Aorta (tissue), 5 donors: ENCODE measurements at regions of chr10 and their contacts with region 1.

Region 1: GRCh38 chr10:784403-785088 is 95.1 kb upstream of the DIP2C start:
- DNase-seq: peak; percentile 83 to 93
- ATAC-seq: peak; percentile 59
- H3K4me3 ChIP-seq: no peak overlapping the region
- H3K27ac ChIP-seq: no peak overlapping the region
- H3K4me1 ChIP-seq: no peaks in the 10 kb centered on the region
- H3K27me3 ChIP-seq: no peaks in the 10 kb centered on the region

Region 2: DNA sequence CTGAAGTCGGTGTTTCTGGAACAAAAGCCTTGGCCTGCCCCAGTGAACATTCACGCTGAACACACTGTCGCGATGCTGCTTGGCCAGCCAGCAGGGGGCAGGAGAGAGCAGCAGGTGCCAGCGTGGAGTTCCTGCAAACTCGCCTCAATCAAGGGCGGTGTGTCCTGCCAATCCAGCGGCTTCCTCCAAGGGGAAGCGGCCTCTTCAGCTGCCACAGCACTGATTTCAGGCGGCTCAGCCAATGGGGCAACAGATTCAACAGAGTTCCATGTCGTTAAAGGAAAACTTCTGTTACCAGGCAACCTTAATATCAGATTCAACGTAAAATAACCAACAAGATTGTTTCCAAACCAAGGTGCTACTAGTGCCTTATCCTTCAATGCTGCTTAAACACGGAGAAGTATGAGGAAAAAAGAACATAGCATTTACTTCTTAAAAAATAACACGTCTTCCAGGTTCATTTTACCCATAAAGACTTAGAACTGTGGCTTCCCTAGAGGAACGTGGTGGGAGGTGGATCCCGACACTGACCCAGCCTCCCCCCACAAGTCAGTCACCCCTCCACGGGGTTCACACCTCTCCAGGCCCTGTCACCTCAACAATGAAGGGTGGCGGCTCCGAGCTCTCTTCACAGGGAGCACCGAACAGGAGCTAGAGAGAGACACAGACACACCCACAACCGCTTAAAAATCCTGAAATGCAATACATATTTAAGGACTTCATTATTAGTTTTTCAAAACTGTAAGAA is 273.3 kb before region 1 on chr10:
- intact Hi-C with region 1: loop called (anchors 5 to 10 kb)
- DNase-seq: peak; percentile 95 to 99
- ATAC-seq: peak; percentile 93
- H3K4me3 ChIP-seq: no peak overlapping the region
- H3K27ac ChIP-seq: no peak overlapping the region
- H3K4me1 ChIP-seq: no peaks in the 10 kb centered on the region
- H3K27me3 ChIP-seq: no peaks in the 10 kb centered on the region

Region 3: DNA sequence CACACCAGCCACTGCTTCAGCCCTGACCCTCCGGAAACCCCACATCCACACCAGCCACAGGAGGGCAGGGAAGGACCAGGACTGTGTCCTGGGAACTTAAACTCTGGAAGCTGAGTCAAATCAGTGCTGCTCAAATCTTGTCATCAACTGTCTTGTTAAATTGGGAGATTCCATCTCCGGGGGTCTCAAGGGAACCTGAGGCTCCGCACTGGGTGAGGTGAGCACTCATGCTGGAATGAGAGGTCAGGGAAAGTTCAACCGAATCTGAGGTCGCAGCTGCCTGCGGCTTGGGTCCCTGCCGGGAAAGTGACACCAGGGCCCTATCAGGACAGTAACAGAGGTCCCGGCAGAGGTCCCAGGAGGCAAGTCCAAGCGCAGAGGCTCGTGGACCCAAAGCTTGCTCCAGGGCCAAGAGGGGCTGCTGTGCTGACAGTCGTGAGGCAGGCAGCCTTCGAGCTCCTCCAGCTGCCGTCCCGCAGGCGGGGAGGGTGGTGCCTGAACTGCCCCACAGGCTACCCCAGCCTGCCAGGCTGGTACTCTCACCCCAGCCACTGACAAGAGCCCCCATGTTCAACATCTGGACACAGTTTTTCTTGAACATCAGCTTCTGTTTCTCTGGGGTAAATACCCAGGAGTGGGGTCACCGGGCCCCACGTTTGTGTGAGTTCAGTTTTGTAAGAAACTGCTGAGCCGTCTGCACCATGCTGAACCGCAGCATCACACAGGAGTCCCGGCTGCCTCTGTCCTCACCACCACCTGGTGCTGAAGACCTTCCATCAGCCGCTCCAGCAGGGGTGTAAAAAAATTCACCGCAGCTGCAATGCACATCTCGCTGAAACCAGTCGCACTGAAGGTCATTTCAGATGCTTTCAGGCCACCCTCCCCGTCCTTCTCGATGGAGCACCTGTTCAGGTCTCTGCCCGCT is 196.0 kb before region 1 on chr10:
- intact Hi-C with region 1: loop called (anchors 10 kb)
- DNase-seq: peak in 1 of 2 donors; percentile 78
- ATAC-seq: peak; percentile 62
- H3K4me3 ChIP-seq: no peak overlapping the region
- H3K27ac ChIP-seq: no peak overlapping the region
- H3K4me1 ChIP-seq: no peaks in the 10 kb centered on the region
- H3K27me3 ChIP-seq: no peaks in the 10 kb centered on the region

Region 4: DNA sequence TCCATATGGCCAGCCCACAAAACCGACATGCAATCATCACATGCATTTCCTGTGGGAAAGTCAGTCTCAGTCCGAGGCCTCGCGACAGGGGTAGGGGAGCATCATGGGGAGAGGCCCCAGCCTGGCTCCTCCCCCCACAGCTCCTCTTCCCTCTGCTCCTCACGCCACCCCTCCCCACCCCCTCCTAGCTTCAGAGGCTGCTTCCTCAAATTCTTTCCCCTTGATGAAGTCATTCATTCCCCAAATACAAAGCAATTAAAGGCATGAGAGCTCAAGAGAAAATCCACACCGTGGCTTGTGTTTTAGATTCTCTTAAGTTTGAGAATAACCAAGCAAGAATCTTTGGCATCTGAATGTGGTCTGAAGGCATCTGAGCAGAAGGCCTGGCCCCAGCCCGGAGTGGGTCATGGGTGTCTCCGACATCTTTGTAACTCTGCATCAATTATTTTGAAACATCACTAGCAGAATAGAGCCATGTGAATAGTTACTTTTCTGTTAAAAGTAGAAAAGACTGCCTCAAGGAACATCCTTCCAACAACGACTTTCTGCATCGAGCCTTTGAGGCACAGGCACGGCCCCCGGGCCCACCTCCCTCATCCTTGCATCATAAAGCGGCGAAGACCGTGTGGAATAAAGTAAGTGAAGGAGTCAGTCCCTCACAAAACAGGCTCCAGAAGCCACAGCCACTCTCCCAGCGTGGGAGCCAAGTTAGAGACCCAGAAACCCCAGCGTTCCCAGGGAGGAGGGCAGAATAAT is 186.0 kb before region 1 on chr10:
- intact Hi-C with region 1: loop called in 1 of 2 experiments (anchors 10 kb)
- DNase-seq: peak; percentile 11 to 79
- ATAC-seq: no peak
- H3K4me3 ChIP-seq: no peak overlapping the region
- H3K27ac ChIP-seq: peak overlapping the region; percentile 62 to 75
- H3K4me1 ChIP-seq: no peaks in the 10 kb centered on the region
- H3K27me3 ChIP-seq: no peaks in the 10 kb centered on the region

Region 5: GRCh38 chr10:689433-690371 is 94.8 kb before region 1 on chr10 and contains the start of gene DIP2C:
- intact Hi-C with region 1: loop called in 1 of 2 experiments (anchors 5 kb)
- DNase-seq: peak; percentile 83 to 92
- ATAC-seq: peak; percentile 81
- H3K4me3 ChIP-seq: peak within 1 kb of the TSS; percentile 75 to 81
- H3K27ac ChIP-seq: peak within 1 kb of the TSS; percentile 20 to 95
- H3K4me1 ChIP-seq: no peaks in the 10 kb centered on the region
- H3K27me3 ChIP-seq: no peaks in the 10 kb centered on the region
- total RNA-seq, gene DIP2C: 38.7 to 40.2 TPM

Region 6: GRCh38 chr10:905503-905902 is 121.0 kb after region 1 on chr10:
- intact Hi-C with region 1: no loop called
- DNase-seq: no peak
- ATAC-seq: no peak
- H3K4me3 ChIP-seq: no peak overlapping the region
- H3K27ac ChIP-seq: no peak overlapping the region
- H3K4me1 ChIP-seq: peaks cover 0 to 4% of the 10 kb centered on the region in 2 donors
- H3K27me3 ChIP-seq: no peaks in the 10 kb centered on the region